Vagina (tissue), 2 donors: ENCODE measurements at regions of chr9 and their contacts with region 1.

Region 1: DNA sequence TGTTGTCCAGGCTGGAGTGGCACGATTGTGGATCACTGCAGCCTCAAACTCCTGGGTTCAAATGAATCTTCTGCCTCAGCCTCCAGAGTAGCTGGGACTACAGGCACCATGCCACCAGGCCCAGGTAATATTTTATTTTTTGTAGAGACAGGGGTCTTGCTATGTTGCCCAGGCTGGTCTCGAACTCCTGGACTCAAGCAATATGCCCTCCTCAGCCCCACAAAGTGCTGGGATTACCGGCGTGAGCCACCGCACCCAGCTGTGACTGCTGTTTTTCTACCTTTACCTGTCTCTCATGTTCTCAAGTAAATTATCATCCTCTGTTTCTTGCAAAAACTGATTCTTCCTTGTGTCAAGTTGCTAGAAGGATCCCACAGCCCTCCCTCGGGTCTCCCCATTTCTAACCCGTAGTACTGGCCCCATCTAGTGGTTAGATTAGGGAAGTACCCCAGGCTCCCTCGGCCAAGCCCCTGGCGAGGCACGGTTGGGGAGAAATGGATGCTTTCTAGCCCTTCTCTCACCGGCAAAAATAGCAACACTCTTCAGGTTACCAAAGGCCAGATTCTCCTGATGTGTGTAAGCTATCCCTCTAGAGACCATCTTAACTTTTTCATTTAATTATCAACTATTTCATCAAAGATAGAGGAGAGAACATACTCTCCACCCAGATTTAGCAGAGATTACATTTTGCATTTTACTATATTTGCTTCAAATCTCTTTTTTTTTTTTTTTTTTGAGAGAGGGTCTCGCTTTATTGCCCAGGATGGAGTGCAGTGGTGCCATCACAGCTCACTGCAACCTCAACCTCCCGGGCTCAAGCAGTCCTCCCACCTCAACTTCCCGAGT is 19.2 kb upstream of the TOR1B start:
- DNase-seq: no peak
- H3K4me3 ChIP-seq: no peak overlapping the region
- H3K27ac ChIP-seq: no peak overlapping the region
- H3K4me1 ChIP-seq: no peaks in the 10 kb centered on the region
- H3K27me3 ChIP-seq: no peaks in the 10 kb centered on the region
- CTCF ChIP-seq: peak; percentile 85 to 94 (median 94)
- POLR2A ChIP-seq: no peak

Region 2: GRCh38 chr9:129737479-129738274 is 46.1 kb before region 1 on chr9:
- intact Hi-C with region 1: loop called (anchors 2 kb)
- DNase-seq: no peak
- H3K4me3 ChIP-seq: peak overlapping the region; percentile 51 to 53
- H3K27ac ChIP-seq: peak overlapping the region; percentile 84
- H3K4me1 ChIP-seq: peaks cover 7% of the 10 kb centered on the region
- H3K27me3 ChIP-seq: no peaks in the 10 kb centered on the region
- CTCF ChIP-seq: peak; percentile 96 to 99 (median 99)
- POLR2A ChIP-seq: peak in 1 of 2 donors; percentile 1